ENCODE measurements at regions of chr19 and their contacts with region 1.

Region 1: DNA sequence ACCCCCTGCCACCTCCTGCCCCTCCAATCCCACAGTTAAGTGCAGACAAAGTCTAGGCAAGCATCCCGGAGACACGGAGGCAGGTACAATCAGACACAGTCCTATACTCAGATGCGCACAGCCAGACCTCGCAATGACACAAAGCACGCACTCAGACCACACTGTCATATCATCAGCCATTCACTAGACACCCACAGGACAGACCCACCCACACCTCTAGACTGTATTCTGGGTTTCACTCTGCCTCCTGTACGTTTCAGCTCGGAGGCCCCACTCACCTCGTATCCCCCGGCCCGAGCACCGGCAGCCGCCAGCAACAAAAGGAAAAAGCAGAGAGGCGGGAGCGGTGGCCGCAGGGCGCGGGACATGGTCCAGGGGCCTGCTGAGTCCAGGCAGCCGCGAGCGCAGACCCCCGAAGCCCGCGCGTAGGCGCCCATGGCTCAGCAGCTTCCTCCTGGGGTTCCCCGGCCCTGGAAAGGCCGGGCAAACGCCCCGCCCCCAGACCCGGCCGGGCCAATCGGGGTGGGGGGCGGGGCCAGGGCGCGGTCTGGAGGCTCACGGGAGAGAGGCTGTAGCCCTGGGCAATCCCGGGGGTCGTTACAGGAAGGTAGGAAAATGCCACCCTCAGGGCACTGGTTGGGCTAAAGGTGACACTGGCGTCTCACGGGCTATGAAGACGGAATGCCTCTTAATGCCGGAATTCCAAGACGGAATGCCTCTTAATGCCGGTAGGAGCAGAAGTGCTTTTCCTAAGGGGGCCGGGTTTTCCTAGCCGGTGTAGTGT is at the starts of genes MAN2B1 and WDR83:
- DNase-seq: peak; percentile 37 to 71
- ATAC-seq: peak; percentile 73 to 77
- H3K4me3 ChIP-seq: peak within 1 kb of the TSS; percentile 89 to 99 (median 96)
- H3K27ac ChIP-seq: peak within 1 kb of the TSS; percentile 82 to 99 (median 98)
- H3K4me1 ChIP-seq: peaks cover 33 to 36% of the 10 kb centered on the region in 2 donors
- H3K27me3 ChIP-seq: no peaks in the 10 kb centered on the region
- CTCF ChIP-seq: no peak
- POLR2A ChIP-seq: peak in 1 of 2 donors; percentile 55
- total RNA-seq, gene MAN2B1: 18.0 to 34.2 (median 29.3) TPM
- total RNA-seq, gene WDR83: 2.2 to 8.4 (median 3.7) TPM

Region 2: DNA sequence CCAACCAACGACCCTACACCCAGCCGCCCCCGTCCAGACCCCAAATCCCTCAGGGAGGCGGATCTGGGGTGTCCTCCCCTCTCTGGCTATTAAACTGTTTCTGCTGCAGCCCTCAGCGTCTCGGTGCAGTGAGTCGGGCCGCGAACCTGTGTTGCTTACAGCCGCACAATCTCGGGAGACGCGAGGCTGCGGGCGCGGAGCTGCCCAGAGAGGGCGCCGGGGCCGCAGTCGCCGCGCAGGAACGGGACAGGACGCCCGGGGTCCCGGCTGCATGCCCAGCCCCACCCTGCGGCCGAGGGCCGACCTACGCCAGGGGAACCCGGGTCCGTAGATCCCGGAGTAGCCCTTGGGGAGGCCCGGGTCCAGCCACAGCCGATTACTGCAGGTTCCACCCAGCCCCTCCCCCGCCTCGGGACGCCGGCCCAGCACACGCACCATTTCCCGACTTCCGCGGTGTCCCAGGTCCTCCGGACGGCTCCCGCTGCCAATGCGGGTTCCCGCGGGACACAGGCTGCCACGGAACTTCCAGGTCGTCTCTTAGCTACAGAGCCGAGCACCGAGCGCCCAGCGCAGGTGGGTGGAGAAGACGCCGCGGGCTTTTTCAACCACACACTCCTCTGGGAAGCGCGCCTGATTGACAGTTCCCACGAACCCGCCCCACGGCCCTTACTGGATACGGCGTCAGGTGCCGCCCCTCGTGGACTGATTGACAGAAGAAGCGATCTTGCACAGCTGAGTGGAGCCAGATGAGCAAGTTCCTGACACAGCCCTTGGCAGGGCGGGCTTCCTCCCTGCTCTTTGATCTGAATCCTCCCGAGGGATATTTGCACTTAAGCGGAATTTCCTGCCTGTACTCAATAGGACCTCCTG is 265.6 kb before region 1 on chr19 and contains the start of gene ZNF799:
- in situ Hi-C with region 1: no loop called
- intact Hi-C with region 1: loop called (anchors 5 kb)
- DNase-seq: peak; percentile 96
- ATAC-seq: peak; percentile 98 to 99
- H3K4me3 ChIP-seq: peak within 1 kb of the TSS; percentile 69 to 94 (median 80)
- H3K27ac ChIP-seq: peak within 1 kb of the TSS; percentile 83 to 95 (median 89)
- H3K4me1 ChIP-seq: peaks cover 5 to 6% of the 10 kb centered on the region in 2 donors
- H3K27me3 ChIP-seq: no peaks in the 10 kb centered on the region
- CTCF ChIP-seq: peak in 2 of 5 experiments; percentile 11 to 15
- POLR2A ChIP-seq: peak; percentile 49 to 57
- total RNA-seq, gene ZNF799: 1.3 to 3.6 (median 3.2) TPM

Region 3: GRCh38 chr19:12564016-12564664 is 102.3 kb before region 1 on chr19:
- in situ Hi-C with region 1: loop called in 2 of 4 experiments (anchors 5 to 10 kb)
- intact Hi-C with region 1: no loop called
- DNase-seq: peak; percentile 55 to 73
- ATAC-seq: peak; percentile 89
- H3K4me3 ChIP-seq: no peak overlapping the region
- H3K27ac ChIP-seq: no peak overlapping the region
- H3K4me1 ChIP-seq: no peaks in the 10 kb centered on the region
- H3K27me3 ChIP-seq: no peaks in the 10 kb centered on the region
- CTCF ChIP-seq: peak; percentile 73 to 89 (median 83)
- POLR2A ChIP-seq: no peak

Region 4: GRCh38 chr19:12610540-12611360 is 55.7 kb before region 1 on chr19 and contains the starts of genes ZNF490 and ZNF791:
- in situ Hi-C with region 1: no loop called
- intact Hi-C with region 1: loop called (anchors 2 kb)
- DNase-seq: peak; percentile 99
- ATAC-seq: peak; percentile 99 to 100
- H3K4me3 ChIP-seq: peak within 1 kb of the TSS; percentile 81 to 100 (median 91)
- H3K27ac ChIP-seq: peak within 1 kb of the TSS; percentile 98 to 100 (median 99)
- H3K4me1 ChIP-seq: peaks cover 23 to 45% of the 10 kb centered on the region in 2 donors
- H3K27me3 ChIP-seq: no peaks in the 10 kb centered on the region
- CTCF ChIP-seq: no peak
- POLR2A ChIP-seq: peak; percentile 90 to 95
- total RNA-seq, gene ZNF490: 2.5 to 4.9 (median 2.9) TPM
- total RNA-seq, gene ZNF791: 7.6 to 10.9 (median 8.8) TPM

Measured in gastrocnemius medialis (tissue), 4 donors.